Mucosa of descending colon (tissue), 3 donors: ENCODE measurements at regions of chr2 and their contacts with region 1.

Region 1: GRCh38 chr2:6526093-6526824 is 339.4 kb downstream of the CMPK2 start:
- DNase-seq: peak in 1 of 3 donors; percentile 67
- ATAC-seq: peak; percentile 41
- H3K4me3 ChIP-seq: no peak overlapping the region
- H3K4me1 ChIP-seq: no peaks in the 10 kb centered on the region
- CTCF ChIP-seq: peak; percentile 22

Region 2: DNA sequence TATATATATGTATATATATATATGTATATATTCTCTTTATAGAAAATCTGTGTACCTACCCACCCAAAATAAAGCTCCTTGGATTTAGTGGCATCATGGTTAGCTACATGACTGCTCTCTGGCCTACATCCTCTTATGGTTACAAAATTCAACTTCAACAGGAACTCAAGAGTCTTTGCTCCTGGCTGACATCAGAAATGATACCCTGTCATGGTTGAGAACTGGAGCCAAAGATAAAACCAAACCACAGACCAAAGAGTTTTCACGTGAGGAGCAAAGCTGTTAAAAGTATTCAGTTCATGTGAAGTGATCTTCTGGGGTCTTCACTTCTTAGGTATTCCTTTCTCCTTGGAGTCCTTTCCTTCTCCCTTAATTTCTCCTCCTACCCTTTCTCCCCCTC is 357.8 kb before region 1 on chr2:
- intact Hi-C with region 1: no loop called
- DNase-seq: no peak
- ATAC-seq: no peak
- H3K4me3 ChIP-seq: no peak overlapping the region
- H3K4me1 ChIP-seq: no peaks in the 10 kb centered on the region
- CTCF ChIP-seq: no peak

Region 3: DNA sequence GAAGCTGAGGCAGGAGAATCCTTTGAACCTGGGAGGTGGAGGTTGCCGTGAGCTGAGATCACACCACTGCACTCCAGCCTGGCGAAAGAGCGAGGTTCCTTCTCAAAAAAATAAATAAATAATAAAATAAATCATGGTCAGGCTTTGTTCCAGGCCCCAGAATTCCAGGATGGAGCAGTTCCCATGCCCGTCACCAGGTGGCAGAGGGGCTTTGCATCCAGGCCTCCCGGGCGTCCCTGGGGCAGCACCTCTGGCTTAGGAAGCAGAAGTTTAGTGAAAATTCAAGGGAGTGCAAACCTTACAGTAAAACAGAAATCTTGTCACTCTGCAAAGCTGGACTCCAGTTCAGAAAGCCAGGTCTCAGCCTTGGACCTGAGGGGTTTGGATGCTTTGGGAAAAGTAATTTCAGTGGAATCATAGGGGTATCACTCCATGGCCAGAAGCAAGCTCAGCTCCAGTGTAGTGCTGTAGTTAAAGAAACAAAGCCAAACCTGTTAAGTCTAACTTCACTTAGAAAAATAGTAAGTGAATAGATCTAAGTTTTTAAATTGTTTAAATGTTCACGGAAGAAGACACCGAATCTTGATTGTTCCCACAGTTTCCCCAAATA is 173.2 kb before region 1 on chr2:
- intact Hi-C with region 1: loop called in 1 of 2 experiments (anchors 5 kb)
- DNase-seq: peak; percentile 55 to 83 (median 80)
- ATAC-seq: peak; percentile 95
- H3K4me3 ChIP-seq: no peak overlapping the region
- H3K4me1 ChIP-seq: no peaks in the 10 kb centered on the region
- CTCF ChIP-seq: peak; percentile 68

Region 4: DNA sequence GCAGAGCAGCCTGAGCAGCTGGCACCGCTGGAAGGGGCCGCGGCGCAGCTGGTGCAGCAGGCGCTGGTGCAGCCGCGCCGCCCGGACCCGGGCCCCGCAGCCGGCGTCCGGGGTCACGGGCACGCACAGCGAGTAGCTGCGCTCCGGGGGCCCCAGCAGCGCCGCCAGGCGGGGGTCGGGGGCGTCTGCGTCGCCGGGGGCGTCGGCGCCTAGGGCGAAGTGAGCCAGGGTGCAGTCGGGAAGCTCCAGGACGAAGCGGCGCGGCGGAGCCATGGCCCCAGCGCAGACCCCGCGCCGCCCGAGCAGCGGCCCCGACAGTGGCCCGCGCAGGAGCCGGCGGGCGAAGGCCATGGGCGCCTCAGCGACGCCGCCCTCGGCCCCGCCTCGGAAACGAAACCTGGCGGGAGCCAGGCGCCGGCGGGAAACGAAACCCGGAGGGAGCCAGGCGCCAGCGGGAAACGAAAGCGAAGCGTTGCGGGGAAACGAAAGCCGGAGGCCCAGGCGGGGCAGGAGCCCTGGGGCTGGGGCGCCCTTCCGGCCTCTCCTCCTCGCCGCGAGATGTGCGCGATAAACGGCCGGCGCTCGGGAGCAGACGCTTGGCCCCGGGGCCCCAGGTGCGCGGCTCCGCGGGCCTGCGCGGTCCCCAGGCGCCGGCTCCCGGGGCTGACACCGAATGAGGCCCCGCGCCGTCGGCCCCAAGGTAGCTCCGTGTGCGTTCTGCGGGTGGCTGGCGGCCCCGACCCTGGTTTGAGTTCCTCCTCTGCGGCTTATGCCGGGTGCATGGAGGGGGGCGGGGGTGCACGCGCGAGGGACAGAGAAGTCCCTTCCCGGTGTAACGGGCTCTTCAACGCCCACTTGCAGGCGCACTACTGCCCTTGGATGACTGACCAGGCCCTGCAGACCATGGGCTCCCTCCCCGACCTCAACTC is 339.4 kb after region 1 on chr2 and contains the start of gene CMPK2:
- intact Hi-C with region 1: no loop called
- DNase-seq: peak; percentile 82 to 89 (median 87)
- ATAC-seq: peak; percentile 89
- H3K4me3 ChIP-seq: peak within 1 kb of the TSS; percentile 54
- H3K4me1 ChIP-seq: peaks cover 9% of the 10 kb centered on the region
- CTCF ChIP-seq: no peak
- total RNA-seq, gene CMPK2: 7.2 to 15.8 (median 9.8) TPM